K562 (cell line): ENCODE measurements at regions of chr16 and their contacts with region 1.

Region 1: DNA sequence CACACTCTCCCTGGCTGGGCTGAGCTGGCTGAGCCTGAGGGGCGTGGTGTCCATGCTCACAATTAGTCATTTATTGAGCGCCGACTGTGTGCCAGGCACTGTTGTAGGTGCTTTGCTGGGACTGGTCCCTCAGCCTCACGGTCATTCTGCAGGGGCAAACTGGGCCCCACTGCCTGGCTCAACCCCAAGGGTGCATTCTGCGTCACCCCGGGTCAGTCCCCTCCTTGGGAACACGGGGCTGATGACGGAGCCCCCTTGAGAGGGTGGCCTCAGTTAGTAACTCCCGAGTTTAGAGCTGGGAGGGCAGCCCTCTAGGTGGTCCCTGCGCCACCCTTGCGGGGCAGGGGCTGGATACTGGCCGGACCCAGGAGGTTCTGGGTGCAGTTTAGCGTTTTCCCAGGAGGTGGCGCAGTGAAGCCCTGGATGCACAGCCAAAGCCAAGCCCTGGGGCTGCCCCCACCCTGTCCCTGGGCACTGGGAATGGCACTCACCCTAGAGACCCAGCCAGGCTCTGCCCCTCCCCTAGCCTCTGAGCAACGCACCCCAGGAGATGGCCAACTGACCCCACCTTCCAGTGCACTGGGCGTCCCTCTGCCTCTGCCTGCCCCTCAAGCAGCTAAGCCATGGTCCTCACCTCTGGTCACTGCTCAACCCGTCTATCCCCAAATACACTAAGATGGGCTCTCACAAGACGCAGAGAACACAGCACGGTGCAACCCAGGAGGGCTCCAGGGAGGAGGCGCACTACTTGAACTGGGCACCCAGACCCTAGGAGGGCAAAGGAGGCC is 243.2 kb upstream of the GSE1 start:
- DNase-seq: peak; percentile 80 to 90 (median 87)
- ATAC-seq: peak; percentile 90
- H3K4me3 ChIP-seq: no peak overlapping the region
- H3K27ac ChIP-seq: no peak overlapping the region; the same call in 2 of the 3 replicates
- H3K4me1 ChIP-seq: peaks cover 42 to 89% of the 10 kb centered on the region in 2 experiments
- H3K27me3 ChIP-seq: no peaks in the 10 kb centered on the region
- CTCF ChIP-seq: peak; percentile 89 to 96 (median 91)
- EP300 ChIP-seq: no peak; the same call in 1 of the 2 replicates
- POLR2A ChIP-seq: no peak
- RAD21 ChIP-seq: peak; percentile 84 to 90

Region 2: GRCh38 chr16:85393674-85394483 is 23.9 kb after region 1 on chr16:
- CTCF ChIA-PET with region 1: interaction called, 6 read pairs
- POLR2A ChIA-PET with region 1: no interaction called
- in situ Hi-C with region 1: no loop called
- intact Hi-C with region 1: loop called (anchors 1 kb)
- DNase-seq: peak; percentile 86 to 94 (median 93)
- ATAC-seq: peak; percentile 87
- H3K4me3 ChIP-seq: no peak overlapping the region
- H3K27ac ChIP-seq: 0 out of 3 replicates have a peak overlapping the region, but pooled peaks have one; percentile 11
- H3K4me1 ChIP-seq: peaks cover 48 to 77% of the 10 kb centered on the region in 2 experiments
- H3K27me3 ChIP-seq: no peaks in the 10 kb centered on the region
- CTCF ChIP-seq: peak; percentile 83 to 96 (median 95)
- EP300 ChIP-seq: no peak
- POLR2A ChIP-seq: no peak
- RAD21 ChIP-seq: peak; percentile 63 to 80

Region 3: DNA sequence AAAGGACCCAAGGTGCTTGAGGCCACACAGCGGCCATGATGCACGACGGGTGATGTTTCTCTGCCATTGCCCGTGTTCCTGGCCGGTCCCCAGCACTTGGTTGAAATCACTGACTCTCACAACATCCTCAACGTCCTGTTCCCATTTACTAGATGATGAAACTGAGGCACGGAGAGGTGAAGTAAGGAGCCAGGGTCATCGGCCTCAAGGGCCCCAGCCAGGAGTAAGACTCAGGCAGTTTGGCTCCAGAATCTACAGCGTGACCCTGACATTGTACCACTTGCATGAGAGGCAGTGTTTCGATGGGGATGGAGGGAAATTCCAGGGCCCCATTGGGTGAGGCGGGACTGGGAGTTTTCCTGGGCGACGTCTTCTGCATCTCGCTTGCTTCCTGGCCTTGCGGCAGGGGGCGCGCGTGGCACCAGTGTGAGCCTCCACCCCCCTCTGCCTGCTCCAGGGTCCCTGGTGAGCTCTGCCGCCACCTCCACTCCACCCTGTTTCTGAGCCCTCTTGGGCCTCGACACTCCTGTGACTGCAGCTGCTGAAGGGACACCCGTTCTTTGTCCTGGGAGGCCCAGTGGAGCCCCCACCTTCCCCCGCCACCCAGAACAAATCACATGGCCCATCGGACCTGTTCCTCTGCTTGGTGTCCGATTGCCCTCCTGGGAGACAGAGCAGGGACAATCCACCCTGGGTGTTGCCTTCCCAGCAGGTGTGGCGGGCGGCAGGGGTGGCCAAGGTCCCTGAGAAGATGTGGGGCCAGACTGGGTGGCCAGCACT is 110.2 kb after region 1 on chr16:
- CTCF ChIA-PET with region 1: no interaction called
- POLR2A ChIA-PET with region 1: no interaction called
- in situ Hi-C with region 1: no loop called
- intact Hi-C with region 1: no loop called
- DNase-seq: no peak
- ATAC-seq: no peak; the same call in 2 of the 3 replicates
- H3K4me3 ChIP-seq: no peak overlapping the region
- H3K27ac ChIP-seq: no peak overlapping the region
- H3K4me1 ChIP-seq: peaks cover 4 to 43% of the 10 kb centered on the region in 2 experiments; a peak in 4 of 5 replicates
- H3K27me3 ChIP-seq: no peaks in the 10 kb centered on the region
- CTCF ChIP-seq: no peak
- EP300 ChIP-seq: no peak
- POLR2A ChIP-seq: no peak
- RAD21 ChIP-seq: no peak